Heart left ventricle (tissue), 16 donors: ENCODE measurements at regions of chr1 and their contacts with region 1.

Region 1: DNA sequence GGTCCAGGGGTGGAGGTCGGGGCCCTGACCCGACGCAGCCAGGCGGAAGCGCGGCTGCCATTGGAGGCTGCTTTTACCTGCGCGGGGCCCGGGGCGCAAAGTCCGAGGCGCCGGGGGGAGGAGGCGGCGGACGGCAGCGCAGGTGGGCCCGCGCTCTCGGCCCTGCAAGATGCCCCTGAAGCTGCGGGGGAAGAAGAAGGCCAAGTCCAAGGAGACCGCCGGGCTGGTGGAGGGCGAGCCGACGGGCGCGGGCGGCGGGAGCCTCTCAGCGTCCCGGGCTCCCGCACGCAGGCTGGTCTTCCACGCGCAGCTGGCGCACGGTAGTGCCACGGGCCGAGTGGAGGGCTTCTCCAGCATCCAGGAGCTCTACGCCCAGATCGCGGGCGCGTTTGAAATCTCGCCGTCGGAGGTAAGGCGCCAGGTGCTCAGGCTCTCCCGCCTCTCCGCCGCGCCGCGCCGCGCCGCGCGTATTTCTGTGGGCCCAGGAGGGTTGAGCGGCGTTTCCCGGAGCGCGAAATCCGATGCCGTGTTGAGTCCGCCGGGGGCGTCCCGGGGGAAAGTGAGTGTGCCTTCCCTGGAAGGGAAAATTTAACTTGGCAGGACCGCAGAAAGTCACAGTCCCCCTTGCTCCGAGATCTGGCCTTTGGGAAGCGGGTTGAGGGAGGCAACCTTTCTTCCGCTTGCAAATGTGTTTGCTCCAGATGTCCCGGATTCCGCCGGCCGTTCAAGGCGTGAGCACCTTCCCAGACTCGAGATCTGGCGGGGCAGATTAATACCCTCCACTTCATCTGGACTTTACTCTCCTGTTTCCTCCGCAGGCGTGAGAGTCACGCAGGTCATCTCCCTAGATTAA is at the start of gene GIPC2:
- DNase-seq: peak; percentile 29 to 66 (median 40)
- ATAC-seq: peak in 3 of 4 donors; percentile 66 to 71 (median 68)
- H3K4me3 ChIP-seq: peak within 1 kb of the TSS; percentile 51 to 90 (median 74)
- H3K27ac ChIP-seq: peak within 1 kb of the TSS; percentile 1 to 83 (median 64)
- H3K4me1 ChIP-seq: peaks cover 0 to 38% (median 11%) of the 10 kb centered on the region in 12 donors
- H3K27me3 ChIP-seq: peaks cover 0 to 26% (median 0%) of the 10 kb centered on the region in 9 donors
- CTCF ChIP-seq: no peak
- POLR2A ChIP-seq: no peak
- total RNA-seq, gene GIPC2: 0.99 to 4.0 (median 2.8) TPM

Region 2: DNA sequence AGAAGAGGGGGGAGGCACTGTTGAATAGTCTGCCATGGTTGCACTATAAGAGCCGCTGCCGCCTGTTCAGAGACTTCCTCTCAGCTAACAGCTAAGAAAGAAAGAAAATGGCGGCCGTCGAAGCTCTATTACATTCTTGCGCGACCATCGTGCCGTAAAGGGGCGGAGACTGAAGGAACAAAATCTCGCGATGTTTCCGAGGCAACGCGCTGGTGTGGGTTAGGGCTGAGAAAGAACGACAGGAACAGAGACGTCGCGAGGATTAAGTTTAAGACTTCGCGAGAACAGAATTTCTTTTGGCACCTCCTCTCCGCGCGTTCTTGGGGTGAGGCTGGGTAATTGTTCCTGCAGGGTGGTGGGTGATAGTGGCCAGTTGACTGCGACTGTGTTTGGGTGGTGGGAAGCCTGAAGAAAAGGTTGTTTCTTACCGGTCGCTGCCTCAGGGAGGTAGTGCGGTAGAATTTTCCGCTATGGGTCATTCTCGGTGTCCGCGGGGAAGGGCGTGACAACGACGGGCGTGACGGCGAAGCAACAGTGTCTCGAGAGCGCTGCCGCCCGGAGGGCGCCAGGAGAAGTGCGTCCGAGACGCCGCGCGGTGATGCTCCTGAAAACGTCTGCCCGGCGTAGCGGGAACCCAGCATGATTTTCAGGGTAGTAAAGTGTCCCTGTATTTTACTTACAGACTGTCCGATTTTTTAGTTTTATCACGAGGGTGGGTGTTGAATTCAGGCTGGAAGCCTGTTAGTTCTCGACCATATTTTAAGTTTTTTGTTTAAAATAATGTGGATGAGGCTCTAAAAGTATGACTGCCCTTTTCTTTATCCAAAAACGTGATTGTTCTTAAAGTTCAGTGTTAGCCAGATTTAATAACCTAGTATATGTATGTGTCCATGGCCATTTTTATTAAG is 66.9 kb before region 1 on chr1 and contains the start of gene FUBP1:
- intact Hi-C with region 1: loop called in 3 of 10 experiments (anchors 2 to 5 kb)
- DNase-seq: peak; percentile 95 to 96 (median 95)
- ATAC-seq: peak; percentile 91 to 94 (median 94)
- H3K4me3 ChIP-seq: peak within 1 kb of the TSS; percentile 42 to 92 (median 80)
- H3K27ac ChIP-seq: peak within 1 kb of the TSS; percentile 91 to 99 (median 96)
- H3K4me1 ChIP-seq: peaks cover 0 to 63% (median 41%) of the 10 kb centered on the region in 12 donors
- H3K27me3 ChIP-seq: no peaks in the 10 kb centered on the region
- CTCF ChIP-seq: peak; percentile 51 to 90 (median 72)
- POLR2A ChIP-seq: peak in 1 of 2 donors; percentile 73
- total RNA-seq, gene FUBP1: 40.5 to 78.9 (median 64.3) TPM

Region 3: DNA sequence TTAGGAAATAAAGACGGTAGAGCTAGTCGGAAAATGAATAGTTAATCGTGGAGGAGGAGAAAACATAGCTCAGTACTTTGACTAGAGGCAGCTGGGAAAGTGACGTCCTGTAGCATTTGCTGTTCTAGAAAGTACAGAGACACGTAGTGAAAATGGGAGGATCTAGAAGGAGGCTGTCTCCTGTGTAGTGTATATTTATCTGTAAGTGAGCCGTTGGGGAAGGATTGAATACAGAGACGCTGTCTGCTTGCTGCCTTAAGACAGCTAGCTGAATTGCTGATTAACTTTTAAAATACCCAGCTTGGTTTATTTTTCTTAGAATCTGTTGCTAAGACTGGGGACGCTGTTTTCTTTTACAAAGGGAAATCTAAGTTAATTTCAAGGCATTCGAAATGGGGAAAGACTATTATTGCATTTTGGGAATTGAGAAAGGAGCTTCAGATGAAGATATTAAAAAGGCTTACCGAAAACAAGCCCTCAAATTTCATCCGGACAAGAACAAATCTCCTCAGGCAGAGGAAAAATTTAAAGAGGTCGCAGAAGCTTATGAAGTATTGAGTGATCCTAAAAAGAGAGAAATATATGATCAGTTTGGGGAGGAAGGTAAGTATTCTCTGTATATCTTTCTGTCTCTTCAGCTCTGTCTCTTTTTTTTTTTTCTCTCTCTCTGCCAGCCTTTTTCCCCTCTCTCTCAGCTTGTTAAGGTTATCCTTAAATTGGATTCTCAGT is 41.3 kb before region 1 on chr1 and contains the start of gene DNAJB4:
- intact Hi-C with region 1: loop called in 3 of 10 experiments (anchors 5 kb)
- DNase-seq: peak in 4 of 5 donors; percentile 51 to 86 (median 81)
- ATAC-seq: peak; percentile 99 to 100 (median 99)
- H3K4me3 ChIP-seq: peak within 1 kb of the TSS; percentile 33 to 73 (median 64)
- H3K27ac ChIP-seq: peak within 1 kb of the TSS; percentile 89 to 96 (median 92)
- H3K4me1 ChIP-seq: peaks cover 0 to 52% (median 19%) of the 10 kb centered on the region in 12 donors
- H3K27me3 ChIP-seq: no peaks in the 10 kb centered on the region
- CTCF ChIP-seq: no peak
- POLR2A ChIP-seq: peak; percentile 98 to 99
- total RNA-seq, gene DNAJB4: 56.7 to 190 (median 95.9) TPM

Region 4: GRCh38 chr1:78101514-78101913 is 55.4 kb after region 1 on chr1:
- intact Hi-C with region 1: loop called in 2 of 10 experiments (anchors 5 to 10 kb)
- DNase-seq: peak in 4 of 5 donors; percentile 50 to 76 (median 62)
- ATAC-seq: peak; percentile 74 to 94 (median 87)
- H3K4me3 ChIP-seq: no peak overlapping the region
- H3K27ac ChIP-seq: peak overlapping the region in 11 of 12 donors; percentile 21 to 83 (median 66)
- H3K4me1 ChIP-seq: peaks cover 0 to 44% (median 21%) of the 10 kb centered on the region in 12 donors
- H3K27me3 ChIP-seq: no peaks in the 10 kb centered on the region
- CTCF ChIP-seq: no peak
- POLR2A ChIP-seq: no peak